ENCODE measurements at regions of chr12 and their contacts with region 1.

Region 1: DNA sequence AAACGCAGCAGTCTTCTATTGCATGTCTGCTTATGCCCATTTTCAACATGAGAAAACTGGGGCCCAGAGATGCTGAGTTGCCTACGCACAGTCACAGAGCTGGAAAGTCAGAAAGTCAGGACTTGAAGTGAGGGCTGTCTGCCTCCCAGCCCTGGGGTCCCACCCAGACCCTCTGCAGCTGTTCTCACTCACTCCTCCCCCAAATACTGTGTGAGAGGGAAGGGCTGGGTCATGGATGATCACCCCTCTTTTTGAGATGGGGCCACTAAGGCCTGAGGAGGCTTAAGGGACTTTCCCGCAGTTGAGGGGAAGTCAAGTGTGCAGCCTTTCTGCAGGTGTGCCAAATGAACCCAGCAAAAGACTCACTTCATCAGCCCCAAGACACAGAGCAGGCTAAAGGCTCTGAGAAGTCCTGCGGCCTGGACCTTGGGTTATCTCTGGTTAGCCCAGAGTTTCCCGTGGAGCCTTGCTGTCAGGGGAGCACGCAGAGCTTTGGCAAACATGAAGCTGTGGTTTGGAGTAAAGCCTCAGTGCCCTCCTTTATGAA is 18.7 kb downstream of the DTX1 start:
- DNase-seq: peak; percentile 95
- ATAC-seq: peak; percentile 86
- H3K4me3 ChIP-seq: peak overlapping the region in 3 of 5 experiments; percentile 12 to 29 (median 19)
- H3K4me3 Mint-ChIP-seq: peak overlapping the region; percentile 74
- H3K27ac ChIP-seq: peak overlapping the region; percentile 91 to 92
- H3K27ac Mint-ChIP-seq: peak overlapping the region; percentile 91
- H3K4me1 ChIP-seq: peaks cover 95 to 97% of the 10 kb centered on the region in 2 donors
- H3K4me1 Mint-ChIP-seq: peaks cover 89% of the 10 kb centered on the region
- H3K27me3 ChIP-seq: no peaks in the 10 kb centered on the region
- H3K27me3 Mint-ChIP-seq: no peaks in the 10 kb centered on the region
- CTCF ChIP-seq: no peak

Region 2: GRCh38 chr12:112906712-112907414 is 168.3 kb before region 1 on chr12 and contains the start of gene OAS1:
- CTCF ChIA-PET with region 1: no interaction called
- POLR2A ChIA-PET with region 1: no interaction called
- intact Hi-C with region 1: loop called (anchors 1 kb)
- DNase-seq: peak; percentile 79
- ATAC-seq: peak; percentile 73
- H3K4me3 ChIP-seq: peak within 1 kb of the TSS; percentile 47 to 90 (median 71)
- H3K4me3 Mint-ChIP-seq: peak within 1 kb of the TSS; percentile 95
- H3K27ac ChIP-seq: peak within 1 kb of the TSS; percentile 79 to 83
- H3K27ac Mint-ChIP-seq: peak within 1 kb of the TSS; percentile 95
- H3K4me1 ChIP-seq: peaks cover 45 to 75% of the 10 kb centered on the region in 2 donors
- H3K4me1 Mint-ChIP-seq: peaks cover 89% of the 10 kb centered on the region
- H3K27me3 ChIP-seq: no peaks in the 10 kb centered on the region
- H3K27me3 Mint-ChIP-seq: no peaks in the 10 kb centered on the region
- CTCF ChIP-seq: no peak
- total RNA-seq, gene OAS1: 45.7 and 48.3 TPM in 2 replicates

Region 3: GRCh38 chr12:112998987-112999767 is 76.0 kb before region 1 on chr12:
- CTCF ChIA-PET with region 1: interaction called, 3 read pairs
- POLR2A ChIA-PET with region 1: no interaction called
- intact Hi-C with region 1: loop called (anchors 2 kb)
- DNase-seq: peak; percentile 78
- ATAC-seq: peak; percentile 93
- H3K4me3 ChIP-seq: no peak overlapping the region
- H3K4me3 Mint-ChIP-seq: peak overlapping the region; percentile 55
- H3K27ac ChIP-seq: peak overlapping the region; percentile 55 to 56
- H3K27ac Mint-ChIP-seq: peak overlapping the region; percentile 88
- H3K4me1 ChIP-seq: peaks cover 18 to 20% of the 10 kb centered on the region in 2 donors
- H3K4me1 Mint-ChIP-seq: peaks cover 25% of the 10 kb centered on the region
- H3K27me3 ChIP-seq: no peaks in the 10 kb centered on the region
- H3K27me3 Mint-ChIP-seq: no peaks in the 10 kb centered on the region
- CTCF ChIP-seq: no peak

Region 4: GRCh38 chr12:113092607-113093408 is 17.6 kb after region 1 on chr12:
- CTCF ChIA-PET with region 1: interaction called, 12 read pairs
- POLR2A ChIA-PET with region 1: interaction called, 4 read pairs
- intact Hi-C with region 1: loop called (anchors 1 kb)
- DNase-seq: peak; percentile 72
- ATAC-seq: peak; percentile 69
- H3K4me3 ChIP-seq: peak overlapping the region in 3 of 5 experiments; percentile 5 to 58 (median 38)
- H3K4me3 Mint-ChIP-seq: peak overlapping the region; percentile 74
- H3K27ac ChIP-seq: peak overlapping the region; percentile 56 to 62
- H3K27ac Mint-ChIP-seq: peak overlapping the region; percentile 68
- H3K4me1 ChIP-seq: peaks cover 54 to 61% of the 10 kb centered on the region in 2 donors
- H3K4me1 Mint-ChIP-seq: peaks cover 58% of the 10 kb centered on the region
- H3K27me3 ChIP-seq: no peaks in the 10 kb centered on the region
- H3K27me3 Mint-ChIP-seq: no peaks in the 10 kb centered on the region
- CTCF ChIP-seq: peak; percentile 36

Region 5: GRCh38 chr12:113164014-113164413 is 88.8 kb after region 1 on chr12:
- CTCF ChIA-PET with region 1: no interaction called
- POLR2A ChIA-PET with region 1: no interaction called
- intact Hi-C with region 1: no loop called
- DNase-seq: no peak
- ATAC-seq: no peak
- H3K4me3 ChIP-seq: no peak overlapping the region
- H3K4me3 Mint-ChIP-seq: no peak overlapping the region
- H3K27ac ChIP-seq: no peak overlapping the region
- H3K27ac Mint-ChIP-seq: no peak overlapping the region
- H3K4me1 ChIP-seq: no peaks in the 10 kb centered on the region
- H3K4me1 Mint-ChIP-seq: peaks cover 2% of the 10 kb centered on the region
- H3K27me3 ChIP-seq: no peaks in the 10 kb centered on the region
- H3K27me3 Mint-ChIP-seq: no peaks in the 10 kb centered on the region
- CTCF ChIP-seq: no peak

Region 6: GRCh38 chr12:113221181-113221997 is 146.2 kb after region 1 on chr12 and contains the start of gene TPCN1:
- CTCF ChIA-PET with region 1: no interaction called
- POLR2A ChIA-PET with region 1: no interaction called
- intact Hi-C with region 1: loop called (anchors 5 kb)
- DNase-seq: peak; percentile 100
- ATAC-seq: peak; percentile 89
- H3K4me3 ChIP-seq: peak within 1 kb of the TSS; percentile 69 to 92 (median 86)
- H3K4me3 Mint-ChIP-seq: peak within 1 kb of the TSS; percentile 90
- H3K27ac ChIP-seq: peak within 1 kb of the TSS; percentile 72 to 93
- H3K27ac Mint-ChIP-seq: peak within 1 kb of the TSS; percentile 89
- H3K4me1 ChIP-seq: peaks cover 32 to 55% of the 10 kb centered on the region in 2 donors
- H3K4me1 Mint-ChIP-seq: peaks cover 41% of the 10 kb centered on the region
- H3K27me3 ChIP-seq: no peaks in the 10 kb centered on the region
- H3K27me3 Mint-ChIP-seq: no peaks in the 10 kb centered on the region
- CTCF ChIP-seq: peak; percentile 21
- total RNA-seq, gene TPCN1: 258 and 267 TPM in 2 replicates

Measured in B cell (primary cell).